CD4-positive, alpha-beta memory T cell (primary cell): ENCODE measurements at regions of chr2 and their contacts with region 1.

Region 1: GRCh38 chr2:241877989-241878970 is 8.8 kb downstream of the RTP5 start:
- DNase-seq: peak; percentile 67 to 80 (median 75)
- H3K4me3 ChIP-seq: no peak overlapping the region
- H3K4me3 Mint-ChIP-seq: no peak overlapping the region
- H3K27ac ChIP-seq: no peak overlapping the region
- H3K27ac Mint-ChIP-seq: peak overlapping the region in 3 of 7 donors; percentile 15 to 77 (median 52)
- H3K4me1 ChIP-seq: peaks cover 29% of the 10 kb centered on the region
- H3K4me1 Mint-ChIP-seq: peaks cover 11 to 38% (median 28%) of the 10 kb centered on the region in 4 donors
- H3K27me3 ChIP-seq: no peaks in the 10 kb centered on the region
- H3K27me3 Mint-ChIP-seq: peaks cover 0 to 3% of the 10 kb centered on the region in 2 donors

Region 2: DNA sequence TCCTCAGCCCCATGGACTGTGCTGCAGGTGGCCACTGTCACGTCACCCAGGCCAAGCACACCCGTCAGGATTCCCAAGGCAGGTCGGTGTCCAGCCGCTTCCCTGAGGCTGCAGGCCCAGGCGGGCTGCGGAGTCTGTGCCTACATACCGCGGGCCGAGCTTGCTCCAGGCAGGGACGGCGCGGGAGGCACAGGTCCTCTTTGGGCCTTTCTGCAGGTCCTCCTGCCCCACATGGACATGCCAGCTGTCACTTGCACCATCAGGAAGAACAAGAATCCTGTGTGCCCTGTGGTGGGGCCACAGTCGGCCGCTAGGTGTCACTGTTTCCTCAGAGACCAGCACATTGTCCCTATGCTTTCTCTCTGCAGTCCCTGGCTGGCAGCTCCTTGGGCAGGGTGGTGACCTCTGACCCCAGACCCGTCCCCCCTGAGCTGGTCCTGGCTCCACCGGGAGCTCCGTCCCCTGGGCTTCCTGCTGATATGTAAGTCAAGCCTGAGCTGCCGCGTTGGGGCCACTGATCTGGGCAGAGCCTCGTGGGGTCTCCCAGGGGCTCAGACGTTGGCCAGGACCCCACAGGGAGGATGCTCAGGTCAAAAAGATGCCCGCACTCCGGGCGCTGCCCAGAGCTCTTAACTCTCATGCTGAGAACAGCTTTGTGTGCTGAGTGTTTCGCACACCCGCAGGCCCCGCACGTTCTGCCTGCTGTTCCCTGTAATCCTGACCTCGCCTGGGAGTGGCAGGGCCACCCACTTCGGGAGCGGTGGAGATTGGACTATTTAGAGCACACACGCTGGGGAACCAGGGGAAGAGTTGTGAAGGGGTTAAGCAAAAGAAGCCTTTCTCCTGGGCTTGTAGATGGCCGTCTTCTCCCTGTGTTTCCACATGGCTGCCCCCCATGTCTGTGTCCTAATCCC is 1026.9 kb before region 1 on chr2:
- CTCF ChIA-PET with region 1: interaction called, 4 read pairs
- POLR2A ChIA-PET with region 1: no interaction called
- intact Hi-C with region 1: loop called (anchors 2 kb)
- DNase-seq: peak; percentile 70 to 80 (median 76)
- H3K4me3 ChIP-seq: no peak overlapping the region
- H3K4me3 Mint-ChIP-seq: no peak overlapping the region
- H3K27ac ChIP-seq: no peak overlapping the region
- H3K27ac Mint-ChIP-seq: no peak overlapping the region
- H3K4me1 ChIP-seq: no peaks in the 10 kb centered on the region
- H3K4me1 Mint-ChIP-seq: no peaks in the 10 kb centered on the region
- H3K27me3 ChIP-seq: no peaks in the 10 kb centered on the region
- H3K27me3 Mint-ChIP-seq: peaks cover 0 to 1% of the 10 kb centered on the region in 2 donors

Region 3: DNA sequence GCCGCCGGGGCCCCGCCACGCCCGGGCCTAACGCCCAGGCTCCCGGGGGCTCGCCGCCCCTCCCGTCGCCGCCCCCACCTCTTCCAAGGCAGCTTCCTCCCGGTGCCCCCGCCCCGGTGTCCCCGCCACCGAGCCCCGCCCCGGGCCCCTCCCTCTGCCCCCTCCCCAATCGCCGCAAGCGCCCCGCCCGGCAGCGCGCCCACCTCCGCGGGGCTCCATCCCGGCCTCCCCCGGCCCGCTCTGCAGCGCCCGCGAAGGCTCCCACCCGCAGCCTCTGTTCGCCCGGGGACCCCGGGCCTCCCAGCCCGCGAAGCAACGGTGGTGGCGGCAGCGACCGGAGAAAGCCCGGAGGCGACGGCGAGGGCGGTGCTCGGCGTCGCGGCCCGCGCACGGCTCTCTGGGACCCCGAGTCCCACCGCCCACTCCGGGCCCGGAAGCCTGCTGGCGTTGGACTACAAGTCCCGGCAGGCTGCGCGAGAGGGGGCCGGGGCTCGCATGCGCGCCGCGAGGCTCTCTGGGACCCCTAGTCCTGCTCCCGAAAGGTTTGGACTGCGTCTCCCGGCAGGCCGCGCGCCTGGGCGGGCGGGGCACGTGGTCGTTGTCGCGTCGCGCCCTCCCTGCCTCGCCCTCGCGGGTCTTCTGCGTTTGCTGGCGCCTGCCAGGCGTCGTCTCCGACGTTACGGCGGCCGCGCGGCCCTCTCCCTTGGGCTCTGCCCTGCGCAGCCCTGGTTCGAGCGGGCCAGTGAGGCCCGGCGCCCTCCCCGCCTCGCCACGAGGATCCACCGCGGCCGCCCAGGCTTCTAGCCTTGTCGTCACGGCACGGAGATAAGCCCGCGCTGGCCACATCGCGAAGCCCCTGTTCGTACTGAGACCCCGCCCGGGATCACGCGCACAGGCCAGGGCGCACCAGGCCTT is 369.8 kb before region 1 on chr2 and contains the start of gene STK25:
- CTCF ChIA-PET with region 1: no interaction called
- POLR2A ChIA-PET with region 1: no interaction called
- intact Hi-C with region 1: loop called (anchors 2 kb)
- DNase-seq: peak; percentile 97 to 98 (median 98)
- H3K4me3 ChIP-seq: peak within 1 kb of the TSS; percentile 29 to 58
- H3K4me3 Mint-ChIP-seq: peak within 1 kb of the TSS; percentile 81 to 85 (median 83)
- H3K27ac ChIP-seq: peak within 1 kb of the TSS; percentile 82
- H3K27ac Mint-ChIP-seq: peak within 1 kb of the TSS; percentile 62 to 94 (median 75)
- H3K4me1 ChIP-seq: peaks cover 18% of the 10 kb centered on the region
- H3K4me1 Mint-ChIP-seq: peaks cover 11 to 41% (median 22%) of the 10 kb centered on the region in 4 donors
- H3K27me3 ChIP-seq: no peaks in the 10 kb centered on the region
- H3K27me3 Mint-ChIP-seq: no peaks in the 10 kb centered on the region
- total RNA-seq, gene STK25: 178 to 182 TPM

Region 4: GRCh38 chr2:241702132-241703031 is 175.9 kb before region 1 on chr2:
- CTCF ChIA-PET with region 1: interaction called, 32 read pairs
- POLR2A ChIA-PET with region 1: interaction called, 13 read pairs
- intact Hi-C with region 1: loop called (anchors 1 kb)
- DNase-seq: peak; percentile 89 to 91 (median 89)
- H3K4me3 ChIP-seq: peak overlapping the region; percentile 61 to 72
- H3K4me3 Mint-ChIP-seq: peak overlapping the region; percentile 76 to 87 (median 83)
- H3K27ac ChIP-seq: peak overlapping the region; percentile 72
- H3K27ac Mint-ChIP-seq: peak overlapping the region in 6 of 7 donors; percentile 53 to 90 (median 86)
- H3K4me1 ChIP-seq: peaks cover 14% of the 10 kb centered on the region
- H3K4me1 Mint-ChIP-seq: peaks cover 12 to 41% (median 26%) of the 10 kb centered on the region in 4 donors
- H3K27me3 ChIP-seq: no peaks in the 10 kb centered on the region
- H3K27me3 Mint-ChIP-seq: no peaks in the 10 kb centered on the region

Region 5: DNA sequence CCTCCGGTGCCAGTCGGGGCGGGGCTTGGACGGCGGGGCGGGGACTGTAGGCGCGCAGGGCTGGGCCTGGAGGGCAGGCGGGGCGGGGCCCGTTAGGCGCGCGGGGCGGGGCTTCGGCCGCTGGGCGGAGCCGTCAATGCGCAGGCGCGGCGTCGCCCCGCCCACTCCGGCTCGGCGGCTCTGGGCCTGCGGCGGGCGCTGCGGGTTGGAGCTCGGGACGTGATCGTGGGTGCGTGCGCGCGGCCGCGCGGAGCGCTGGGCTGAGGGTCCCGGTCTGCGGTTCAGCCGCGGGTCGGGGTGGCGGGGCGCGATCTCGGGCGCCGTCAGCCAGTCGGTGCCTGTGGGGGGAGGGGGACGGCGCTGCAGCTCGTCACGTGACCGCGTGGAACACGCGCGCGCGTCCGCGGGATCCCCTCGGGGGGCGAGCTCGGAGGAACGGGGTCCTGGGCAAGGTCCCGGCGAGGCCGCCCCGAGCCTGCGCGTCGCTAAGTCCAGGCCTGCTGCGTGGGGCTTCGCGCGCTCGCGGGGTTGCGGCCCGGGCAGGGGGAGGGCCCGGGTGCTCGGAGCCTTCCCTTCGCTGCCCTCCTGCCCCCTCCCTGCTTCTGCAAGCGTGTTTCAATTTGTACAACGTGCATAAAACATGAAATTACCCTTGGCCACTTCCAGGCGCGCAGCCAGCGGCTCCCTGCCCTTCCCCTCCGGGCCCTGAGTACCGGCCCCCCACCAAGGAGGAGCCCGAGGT is 143.6 kb before region 1 on chr2 and contains the start of gene D2HGDH:
- CTCF ChIA-PET with region 1: interaction called, 10 read pairs
- POLR2A ChIA-PET with region 1: interaction called, 9 read pairs
- intact Hi-C with region 1: loop called (anchors 1 kb)
- DNase-seq: peak; percentile 89 to 95 (median 91)
- H3K4me3 ChIP-seq: peak within 1 kb of the TSS; percentile 34 to 93
- H3K4me3 Mint-ChIP-seq: peak within 1 kb of the TSS; percentile 79 to 89 (median 85)
- H3K27ac ChIP-seq: peak within 1 kb of the TSS; percentile 67
- H3K27ac Mint-ChIP-seq: peak within 1 kb of the TSS; percentile 57 to 90 (median 79)
- H3K4me1 ChIP-seq: peaks cover 17% of the 10 kb centered on the region
- H3K4me1 Mint-ChIP-seq: peaks cover 16 to 54% (median 30%) of the 10 kb centered on the region in 4 donors
- H3K27me3 ChIP-seq: no peaks in the 10 kb centered on the region
- H3K27me3 Mint-ChIP-seq: no peaks in the 10 kb centered on the region
- total RNA-seq, gene D2HGDH: 48.7 to 53.9 TPM

Region 6: DNA sequence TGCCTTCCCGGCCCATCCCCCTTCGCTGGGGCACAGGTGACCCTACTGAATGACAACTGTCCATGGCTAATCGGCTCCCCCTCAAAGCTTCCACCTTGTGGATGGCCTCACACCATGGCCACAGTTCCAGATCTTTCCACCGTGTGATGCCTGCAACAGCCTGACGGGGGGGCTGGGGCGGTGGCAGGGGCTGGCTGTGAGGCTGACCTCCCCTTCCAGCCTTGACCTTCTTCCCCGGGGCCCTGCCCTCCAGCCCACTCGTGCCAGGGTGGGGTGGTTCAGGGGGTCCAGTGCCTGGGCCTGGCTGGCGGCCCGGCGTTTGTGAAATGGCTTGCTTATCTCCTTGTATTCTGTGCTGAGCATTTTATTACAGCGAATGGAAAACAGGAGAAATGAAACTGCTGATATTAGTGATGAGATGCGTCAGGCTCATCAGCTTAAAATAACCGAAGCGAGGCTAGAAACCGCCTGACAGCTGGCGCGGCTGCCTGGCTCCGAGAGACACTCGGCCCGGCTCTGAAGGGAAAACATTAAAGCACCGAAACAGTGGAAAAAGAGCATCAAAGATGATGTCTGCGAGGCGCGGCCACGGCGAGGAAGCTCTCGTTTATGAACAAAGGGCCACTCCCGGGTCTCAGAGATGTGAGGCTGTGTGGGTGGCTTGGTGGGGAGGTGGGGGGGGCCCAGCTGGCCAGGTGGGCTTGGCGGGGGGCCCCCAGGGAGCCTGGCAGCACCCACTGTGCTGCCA is 18.7 kb before region 1 on chr2:
- CTCF ChIA-PET with region 1: interaction called, 5 read pairs
- POLR2A ChIA-PET with region 1: interaction called, 9 read pairs
- intact Hi-C with region 1: loop called (anchors 2 kb)
- DNase-seq: peak; percentile 26 to 71 (median 39)
- H3K4me3 ChIP-seq: peak overlapping the region; percentile 23 to 68
- H3K4me3 Mint-ChIP-seq: peak overlapping the region; percentile 87 to 96 (median 90)
- H3K27ac ChIP-seq: peak overlapping the region; percentile 64
- H3K27ac Mint-ChIP-seq: peak overlapping the region; percentile 92 to 98 (median 96)
- H3K4me1 ChIP-seq: peaks cover 84% of the 10 kb centered on the region
- H3K4me1 Mint-ChIP-seq: peaks cover 37 to 79% (median 55%) of the 10 kb centered on the region in 4 donors
- H3K27me3 ChIP-seq: no peaks in the 10 kb centered on the region
- H3K27me3 Mint-ChIP-seq: peaks cover 0 to 2% of the 10 kb centered on the region in 2 donors